PC-3 (cell line): ENCODE measurements at regions of chr1 and their contacts with region 1.

Region 1: GRCh38 chr1:199551967-199552565 is 475.4 kb upstream of the NR5A2 start:
- DNase-seq: peak; percentile 73
- ATAC-seq: peak; percentile 22; the same call in 1 of the 2 replicates
- H3K4me3 ChIP-seq: no peak overlapping the region
- H3K27ac ChIP-seq: no peak overlapping the region
- H3K4me1 ChIP-seq: peaks cover 12% of the 10 kb centered on the region; the same call in 1 of the 2 replicates
- H3K27me3 ChIP-seq: no peaks in the 10 kb centered on the region
- CTCF ChIP-seq: peak; percentile 79

Region 2: GRCh38 chr1:199102239-199102638 is 449.8 kb before region 1 on chr1:
- CTCF ChIA-PET with region 1: no interaction called
- POLR2A ChIA-PET with region 1: interaction called, 20 read pairs
- intact Hi-C with region 1: no loop called
- DNase-seq: no peak
- ATAC-seq: no peak
- H3K4me3 ChIP-seq: no peak overlapping the region
- H3K27ac ChIP-seq: no peak overlapping the region
- H3K4me1 ChIP-seq: no peaks in the 10 kb centered on the region
- H3K27me3 ChIP-seq: no peaks in the 10 kb centered on the region
- CTCF ChIP-seq: no peak

Region 3: DNA sequence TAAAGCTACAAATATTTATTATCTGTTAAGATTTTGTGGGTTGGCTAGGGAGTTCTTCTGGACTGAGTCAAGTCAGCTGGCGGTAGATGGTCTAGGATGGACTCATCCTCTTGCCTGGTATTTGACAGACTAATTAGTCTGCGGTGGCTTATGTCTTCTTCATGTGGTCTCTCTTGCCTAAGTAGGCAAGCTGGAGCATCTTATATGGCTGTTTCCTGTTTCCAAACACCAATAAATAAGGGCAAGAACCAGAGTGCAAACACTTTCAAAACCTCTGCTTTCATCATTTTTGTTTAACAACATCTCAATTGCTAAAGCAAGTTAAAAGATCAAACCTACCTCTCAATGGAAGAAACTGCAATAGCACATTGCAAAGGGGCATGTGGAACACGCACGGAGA is 428.5 kb before region 1 on chr1:
- CTCF ChIA-PET with region 1: no interaction called
- POLR2A ChIA-PET with region 1: no interaction called
- intact Hi-C with region 1: loop called (anchors 5 kb)
- DNase-seq: peak; percentile 3
- ATAC-seq: no peak
- H3K4me3 ChIP-seq: no peak overlapping the region
- H3K27ac ChIP-seq: peak overlapping the region; percentile 86
- H3K4me1 ChIP-seq: peaks cover 27% of the 10 kb centered on the region
- H3K27me3 ChIP-seq: no peaks in the 10 kb centered on the region
- CTCF ChIP-seq: no peak

Region 4: GRCh38 chr1:199272643-199273086 is 279.4 kb before region 1 on chr1:
- CTCF ChIA-PET with region 1: no interaction called
- POLR2A ChIA-PET with region 1: no interaction called
- intact Hi-C with region 1: loop called (anchors 5 kb)
- DNase-seq: peak; percentile 89
- ATAC-seq: peak; percentile 91
- H3K4me3 ChIP-seq: no peak overlapping the region
- H3K27ac ChIP-seq: peak overlapping the region; percentile 74
- H3K4me1 ChIP-seq: peaks cover 34% of the 10 kb centered on the region
- H3K27me3 ChIP-seq: no peaks in the 10 kb centered on the region
- CTCF ChIP-seq: no peak

Region 5: DNA sequence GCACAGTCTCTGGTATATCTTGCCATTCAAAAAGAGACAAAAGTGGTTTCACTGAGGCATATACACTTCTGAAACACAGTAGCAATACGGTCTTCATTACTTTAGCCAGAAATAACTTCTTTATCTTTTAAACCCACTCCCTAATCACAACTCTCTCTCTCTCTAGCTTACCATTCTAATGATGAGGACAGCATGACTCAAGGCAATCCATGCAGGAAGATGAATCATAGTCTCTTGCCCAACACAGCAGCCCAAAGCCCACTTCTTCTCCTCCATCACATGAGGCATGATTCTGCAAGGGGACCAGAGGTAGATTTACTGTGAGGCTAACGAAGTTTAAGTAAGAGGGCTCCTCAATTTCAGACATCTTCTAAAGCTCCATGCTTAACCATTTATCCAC is 190.5 kb after region 1 on chr1:
- CTCF ChIA-PET with region 1: no interaction called
- POLR2A ChIA-PET with region 1: no interaction called
- intact Hi-C with region 1: no loop called
- DNase-seq: peak; percentile 75
- ATAC-seq: peak; percentile 91
- H3K4me3 ChIP-seq: no peak overlapping the region
- H3K27ac ChIP-seq: peak overlapping the region; percentile 86
- H3K4me1 ChIP-seq: peaks cover 23% of the 10 kb centered on the region
- H3K27me3 ChIP-seq: no peaks in the 10 kb centered on the region
- CTCF ChIP-seq: no peak

Region 6: GRCh38 chr1:201481761-201482493 is 1929.9 kb after region 1 on chr1:
- CTCF ChIA-PET with region 1: no interaction called
- POLR2A ChIA-PET with region 1: no interaction called
- intact Hi-C with region 1: no loop called
- DNase-seq: peak; percentile 76
- ATAC-seq: peak; percentile 68
- H3K4me3 ChIP-seq: no peak overlapping the region
- H3K27ac ChIP-seq: no peak overlapping the region
- H3K4me1 ChIP-seq: peaks cover 17% of the 10 kb centered on the region
- H3K27me3 ChIP-seq: no peaks in the 10 kb centered on the region
- CTCF ChIP-seq: peak; percentile 85